ENCODE measurements at regions of chr19 and their contacts with region 1.

Region 1: GRCh38 chr19:51703575-51704515 is 10.7 kb downstream of the SPACA6 start:
- DNase-seq: peak; percentile 97
- H3K4me3 ChIP-seq: peak overlapping the region; percentile 57 to 71
- H3K27ac ChIP-seq: peak overlapping the region; percentile 88 to 91
- H3K4me1 ChIP-seq: peaks cover 13% of the 10 kb centered on the region
- H3K27me3 ChIP-seq: no peaks in the 10 kb centered on the region
- CTCF ChIP-seq: peak; percentile 17 to 76 (median 62)
- POLR2A ChIP-seq: peak; percentile 92

Region 2: GRCh38 chr19:51367565-51368365 is 336.1 kb before region 1 on chr19:
- intact Hi-C with region 1: loop called (anchors 5 kb)
- DNase-seq: peak; percentile 98
- H3K4me3 ChIP-seq: peak overlapping the region; percentile 61 to 76
- H3K27ac ChIP-seq: peak overlapping the region; percentile 85 to 86
- H3K4me1 ChIP-seq: peaks cover 8% of the 10 kb centered on the region
- H3K27me3 ChIP-seq: no peaks in the 10 kb centered on the region
- CTCF ChIP-seq: peak in 1 of 4 experiments; percentile 31
- POLR2A ChIP-seq: peak; percentile 1

Region 3: GRCh38 chr19:51586103-51586728 is 117.6 kb before region 1 on chr19:
- intact Hi-C with region 1: no loop called
- DNase-seq: no peak
- H3K4me3 ChIP-seq: no peak overlapping the region
- H3K27ac ChIP-seq: no peak overlapping the region
- H3K4me1 ChIP-seq: no peaks in the 10 kb centered on the region
- H3K27me3 ChIP-seq: no peaks in the 10 kb centered on the region
- CTCF ChIP-seq: no peak
- POLR2A ChIP-seq: no peak

Region 4: GRCh38 chr19:51628153-51628939 is 75.5 kb before region 1 on chr19:
- intact Hi-C with region 1: no loop called
- DNase-seq: no peak
- H3K4me3 ChIP-seq: no peak overlapping the region
- H3K27ac ChIP-seq: no peak overlapping the region
- H3K4me1 ChIP-seq: no peaks in the 10 kb centered on the region
- H3K27me3 ChIP-seq: no peaks in the 10 kb centered on the region
- CTCF ChIP-seq: no peak
- POLR2A ChIP-seq: no peak

Region 5: DNA sequence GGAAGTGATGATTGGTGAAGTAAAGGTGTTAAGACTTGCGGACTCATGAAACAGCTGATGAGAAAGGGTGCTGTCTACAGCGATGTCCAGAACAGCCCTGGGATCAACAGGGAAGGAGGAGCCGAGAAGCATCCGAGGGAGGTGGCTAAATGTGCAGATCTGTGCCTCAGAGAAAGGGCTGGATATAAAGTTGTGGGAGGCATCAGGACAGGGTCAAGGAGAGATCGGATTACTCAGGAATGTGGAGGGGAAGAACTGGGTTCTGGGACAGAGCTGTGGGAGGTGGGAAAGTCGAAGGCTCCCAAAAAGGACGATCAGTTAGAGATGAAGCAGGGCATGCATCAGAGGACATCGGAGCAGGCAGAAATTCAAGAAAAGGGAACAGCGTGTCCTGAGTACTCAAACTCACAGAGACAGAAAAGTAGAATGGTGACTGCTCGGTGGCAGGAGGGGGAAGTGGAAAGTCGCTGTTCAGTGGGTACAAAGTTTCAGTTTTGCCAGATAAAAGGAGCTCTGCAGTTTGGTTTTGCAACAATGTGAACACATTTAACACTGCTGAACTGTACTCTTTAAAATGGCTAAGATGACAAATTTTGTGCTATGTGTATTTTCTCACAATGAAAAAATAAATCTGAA is 59.1 kb before region 1 on chr19:
- intact Hi-C with region 1: no loop called
- DNase-seq: no peak
- H3K4me3 ChIP-seq: no peak overlapping the region
- H3K27ac ChIP-seq: no peak overlapping the region
- H3K4me1 ChIP-seq: no peaks in the 10 kb centered on the region
- H3K27me3 ChIP-seq: peaks cover 2% of the 10 kb centered on the region
- CTCF ChIP-seq: no peak
- POLR2A ChIP-seq: no peak

Region 6: GRCh38 chr19:51690454-51691073 is 13.3 kb before region 1 on chr19:
- intact Hi-C with region 1: loop called (anchors 2 kb)
- DNase-seq: peak; percentile 48
- H3K4me3 ChIP-seq: peak overlapping the region; percentile 70 to 99
- H3K27ac ChIP-seq: peak overlapping the region; percentile 94 to 98
- H3K4me1 ChIP-seq: peaks cover 7% of the 10 kb centered on the region
- H3K27me3 ChIP-seq: no peaks in the 10 kb centered on the region
- CTCF ChIP-seq: peak in 1 of 4 experiments; percentile 1
- POLR2A ChIP-seq: peak; percentile 41